Activated CD4-positive, alpha-beta T cell treated with anti-CD3 and anti-CD28 coated beads for 36 hours (primary cell): ENCODE measurements at regions of chr14 and their contacts with region 1.

Region 1: DNA sequence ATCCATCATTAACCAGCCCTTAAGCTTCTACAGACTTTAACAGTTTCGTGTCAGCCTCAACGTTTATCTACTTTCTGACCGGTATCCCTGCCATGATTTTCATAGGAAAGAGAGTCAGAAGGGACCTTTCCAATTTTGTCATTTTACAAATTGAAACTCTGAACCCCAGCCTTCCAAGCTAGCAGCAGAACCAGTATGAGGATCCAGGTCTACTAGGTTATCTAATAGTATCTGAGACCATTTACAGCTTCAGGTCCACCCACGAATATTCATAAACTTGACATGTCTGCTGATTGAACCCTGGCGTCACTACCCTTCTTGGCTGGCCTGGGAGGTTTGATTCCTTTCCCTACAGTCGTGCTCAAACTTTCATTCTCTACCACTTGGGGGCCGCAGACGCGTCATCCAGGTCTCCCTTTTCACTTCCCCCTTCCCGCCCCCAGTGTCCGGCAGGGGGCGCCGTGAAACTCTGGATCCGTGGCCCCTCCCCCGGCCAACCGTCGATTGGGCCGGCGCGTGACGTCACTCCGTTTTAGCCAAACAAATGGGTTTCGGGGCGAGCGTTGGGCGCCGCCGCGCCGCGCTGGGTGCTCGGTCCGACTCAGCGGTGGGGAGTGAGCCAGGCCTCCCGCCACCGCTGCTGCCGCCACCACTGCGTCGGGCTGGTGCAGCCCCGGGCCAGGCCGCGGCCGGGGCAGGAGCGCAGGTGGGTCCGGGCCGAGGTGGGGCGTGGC is at the start of gene FBXO34:
- DNase-seq: peak; percentile 100
- ATAC-seq: peak; percentile 89
- H3K4me3 Mint-ChIP-seq: peak within 1 kb of the TSS; percentile 87
- H3K27ac Mint-ChIP-seq: peak within 1 kb of the TSS; percentile 93
- H3K4me1 Mint-ChIP-seq: peaks cover 39% of the 10 kb centered on the region
- H3K27me3 Mint-ChIP-seq: no peaks in the 10 kb centered on the region
- total RNA-seq, gene FBXO34: 18.5 to 18.9 TPM

Region 2: GRCh38 chr14:55146425-55146824 is 124.6 kb before region 1 on chr14:
- CTCF ChIA-PET with region 1: no interaction called
- POLR2A ChIA-PET with region 1: no interaction called
- intact Hi-C with region 1: no loop called
- DNase-seq: no peak
- ATAC-seq: peak; percentile 19
- H3K4me3 Mint-ChIP-seq: no peak overlapping the region
- H3K27ac Mint-ChIP-seq: no peak overlapping the region
- H3K4me1 Mint-ChIP-seq: no peaks in the 10 kb centered on the region
- H3K27me3 Mint-ChIP-seq: no peaks in the 10 kb centered on the region

Region 3: GRCh38 chr14:55191203-55192053 is 79.6 kb before region 1 on chr14 and contains the start of gene DLGAP5:
- CTCF ChIA-PET with region 1: interaction called, 3 read pairs
- POLR2A ChIA-PET with region 1: no interaction called
- intact Hi-C with region 1: loop called in 1 of 2 experiments (anchors 1 kb)
- DNase-seq: peak; percentile 95
- ATAC-seq: peak; percentile 99
- H3K4me3 Mint-ChIP-seq: peak within 1 kb of the TSS; percentile 91
- H3K27ac Mint-ChIP-seq: peak within 1 kb of the TSS; percentile 84
- H3K4me1 Mint-ChIP-seq: peaks cover 29% of the 10 kb centered on the region
- H3K27me3 Mint-ChIP-seq: no peaks in the 10 kb centered on the region
- total RNA-seq, gene DLGAP5: 97.4 to 100 TPM

Region 4: DNA sequence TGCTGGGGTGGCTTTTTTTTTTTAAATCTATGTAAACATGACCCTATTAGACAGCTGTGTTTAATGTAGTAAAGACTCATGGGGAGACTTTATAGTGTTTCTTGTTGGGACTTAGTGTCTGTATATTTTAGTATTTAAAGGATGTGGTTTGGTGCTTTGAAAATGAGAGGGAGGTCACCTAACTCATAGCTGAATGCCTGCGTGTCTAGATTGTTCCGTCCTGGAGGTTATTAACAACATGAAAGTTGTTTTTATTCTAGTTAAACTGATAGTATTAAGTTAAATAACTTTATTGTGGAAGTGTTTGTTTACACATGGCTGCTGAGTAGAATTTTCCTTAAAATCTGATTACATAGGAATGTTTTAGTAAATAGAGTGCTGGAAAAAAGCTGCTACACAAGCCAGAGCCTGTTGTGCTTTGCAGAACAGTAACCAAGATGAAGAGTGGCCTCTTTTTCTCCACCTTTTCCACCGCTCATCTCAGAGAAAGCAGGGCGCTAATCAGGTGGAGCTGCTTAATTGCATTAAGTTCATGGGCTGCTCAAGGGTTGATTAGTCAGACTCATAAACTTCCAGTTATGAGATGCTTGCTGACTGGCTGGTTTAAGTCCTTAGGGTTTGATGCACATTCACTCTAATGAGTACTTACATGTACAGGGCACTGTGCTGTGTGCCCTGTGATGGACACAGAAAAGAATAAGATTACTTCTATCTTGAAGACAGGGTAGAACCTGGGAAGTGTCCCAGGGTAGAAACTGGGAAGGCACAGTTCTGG is 62.9 kb after region 1 on chr14:
- CTCF ChIA-PET with region 1: interaction called, 8 read pairs
- POLR2A ChIA-PET with region 1: no interaction called
- intact Hi-C with region 1: loop called (anchors 1 to 2 kb)
- DNase-seq: no peak
- ATAC-seq: peak; percentile 31
- H3K4me3 Mint-ChIP-seq: peak overlapping the region; percentile 16
- H3K27ac Mint-ChIP-seq: peak overlapping the region; percentile 69
- H3K4me1 Mint-ChIP-seq: peaks cover 85% of the 10 kb centered on the region
- H3K27me3 Mint-ChIP-seq: no peaks in the 10 kb centered on the region

Region 5: DNA sequence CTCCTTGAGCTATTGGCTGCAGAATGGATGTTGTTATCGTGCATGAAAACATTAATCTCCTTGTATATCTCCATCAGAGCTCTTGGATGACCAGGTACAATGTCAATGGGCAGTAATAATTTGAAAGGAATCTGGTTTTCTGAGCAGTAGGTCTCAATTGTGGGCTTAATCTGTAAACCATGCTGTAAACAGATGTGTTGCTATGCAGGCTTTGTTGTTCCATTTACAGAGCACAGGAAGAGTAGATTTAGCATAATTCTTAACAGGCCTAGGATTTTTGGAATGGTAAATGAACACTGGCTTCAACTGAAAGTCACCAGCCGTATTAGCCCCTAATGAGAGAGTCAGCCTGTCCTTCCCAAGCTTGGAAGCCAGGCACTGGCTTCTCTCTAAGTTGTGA is 90.2 kb after region 1 on chr14:
- CTCF ChIA-PET with region 1: interaction called, 96 read pairs
- POLR2A ChIA-PET with region 1: no interaction called
- intact Hi-C with region 1: no loop called
- DNase-seq: no peak
- ATAC-seq: no peak
- H3K4me3 Mint-ChIP-seq: no peak overlapping the region
- H3K27ac Mint-ChIP-seq: no peak overlapping the region
- H3K4me1 Mint-ChIP-seq: peaks cover 10% of the 10 kb centered on the region
- H3K27me3 Mint-ChIP-seq: no peaks in the 10 kb centered on the region

Region 6: DNA sequence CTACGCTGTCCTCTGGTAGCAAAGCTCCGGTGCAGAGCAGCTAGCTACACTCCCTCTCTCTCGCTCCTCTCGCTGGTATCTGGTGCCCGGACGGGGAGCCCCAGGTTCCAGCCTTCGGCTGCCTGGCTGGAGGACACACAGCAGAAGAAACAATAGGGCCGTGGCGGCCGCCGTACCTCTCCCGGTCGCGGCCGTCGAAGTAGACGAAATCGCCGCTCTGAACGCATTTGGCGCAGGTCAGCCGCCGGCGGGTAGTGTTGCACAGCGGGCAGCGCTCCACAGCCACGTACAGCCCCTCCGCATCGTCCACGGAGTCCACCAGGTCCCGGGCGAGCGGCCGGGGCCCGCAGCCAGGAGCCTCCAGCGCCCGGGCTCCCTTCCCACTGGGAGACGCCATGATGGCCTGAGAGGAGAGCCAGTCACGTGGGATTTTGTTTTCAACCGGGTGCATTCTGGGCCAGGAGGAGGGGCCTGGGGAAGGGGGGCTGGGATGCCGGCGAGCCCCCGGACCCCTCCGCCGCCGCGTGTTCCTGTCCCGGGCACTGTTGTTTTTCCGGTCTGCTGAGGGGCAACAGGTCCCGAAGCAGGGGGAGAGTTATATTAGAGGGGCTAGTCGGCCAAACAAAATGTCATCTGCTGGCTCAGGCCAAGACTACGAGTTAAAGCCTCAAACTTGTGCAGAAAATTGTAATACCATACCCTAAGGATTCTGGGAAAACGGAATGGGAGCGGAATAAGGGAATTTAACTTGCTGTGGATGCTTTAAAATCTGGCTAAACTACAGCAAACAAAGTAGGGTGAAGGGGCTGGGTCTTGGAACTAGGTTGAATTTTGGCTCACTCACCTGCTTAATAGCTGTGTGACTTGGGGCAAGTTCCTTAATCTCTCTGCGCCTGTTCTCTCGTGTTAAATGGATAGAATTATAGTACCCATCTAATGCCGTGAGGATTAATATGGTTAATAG is 140.7 kb after region 1 on chr14 and contains the start of gene ATG14:
- CTCF ChIA-PET with region 1: interaction called, 6 read pairs
- POLR2A ChIA-PET with region 1: no interaction called
- intact Hi-C with region 1: loop called in 1 of 2 experiments (anchors 1 kb)
- DNase-seq: peak; percentile 88
- ATAC-seq: peak; percentile 99
- H3K4me3 Mint-ChIP-seq: peak within 1 kb of the TSS; percentile 79
- H3K27ac Mint-ChIP-seq: peak within 1 kb of the TSS; percentile 82
- H3K4me1 Mint-ChIP-seq: peaks cover 27% of the 10 kb centered on the region
- H3K27me3 Mint-ChIP-seq: no peaks in the 10 kb centered on the region
- total RNA-seq, gene ATG14: 5.0 to 5.1 TPM